Activated CD4-positive, alpha-beta T cell treated with anti-CD3 and anti-CD28 coated beads, Interleukin-2, amount 10 ng/mL, durations not matched to agents 24 days and 14 days (primary cell): ENCODE measurements at regions of chr6 and their contacts with region 1.

Region 1: GRCh38 chr6:28136585-28137504 is 4.8 kb upstream of the ZKSCAN8 start:
- DNase-seq: peak; percentile 92
- H3K4me3 Mint-ChIP-seq: peak overlapping the region; percentile 93
- H3K27ac Mint-ChIP-seq: peak overlapping the region; percentile 94
- H3K4me1 Mint-ChIP-seq: peaks cover 58% of the 10 kb centered on the region
- H3K27me3 Mint-ChIP-seq: no peaks in the 10 kb centered on the region

Region 2: GRCh38 chr6:28104392-28105244 is 32.2 kb before region 1 on chr6:
- intact Hi-C with region 1: loop called (anchors 1 kb)
- DNase-seq: peak; percentile 94
- H3K4me3 Mint-ChIP-seq: peak overlapping the region; percentile 87
- H3K27ac Mint-ChIP-seq: peak overlapping the region; percentile 79
- H3K4me1 Mint-ChIP-seq: peaks cover 8% of the 10 kb centered on the region
- H3K27me3 Mint-ChIP-seq: peaks cover 18% of the 10 kb centered on the region

Region 3: DNA sequence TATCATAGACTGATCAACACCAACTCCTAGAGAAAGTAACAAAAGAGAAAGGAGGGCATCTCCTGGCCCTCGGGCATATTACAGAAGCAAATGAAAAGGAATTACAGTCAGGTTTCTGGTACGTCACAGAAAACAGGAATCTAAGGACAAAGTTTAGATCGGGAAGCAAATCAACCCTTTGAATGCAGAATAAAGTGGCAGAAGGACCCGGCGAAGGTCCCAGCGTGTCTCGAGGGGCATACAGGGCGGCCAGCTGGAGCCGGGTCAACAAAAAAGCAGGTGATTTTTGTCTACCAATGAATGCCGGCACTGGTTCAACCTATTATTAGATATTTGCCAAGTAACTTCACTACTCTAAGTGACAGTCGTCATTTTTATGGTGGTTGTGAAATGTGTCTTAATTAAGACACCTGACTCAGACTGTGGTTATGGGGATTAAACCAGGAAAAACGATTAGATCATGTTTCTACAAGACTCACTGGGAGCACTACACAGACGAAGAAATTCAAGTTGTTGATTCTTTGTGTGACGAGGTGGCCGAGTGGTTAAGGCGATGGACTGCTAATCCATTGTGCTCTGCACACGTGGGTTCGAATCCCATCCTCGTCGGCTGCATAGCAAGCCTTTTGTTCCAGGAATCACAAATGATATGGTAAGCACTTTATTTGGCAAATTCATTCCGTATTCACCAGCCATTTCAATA is 75.8 kb after region 1 on chr6:
- intact Hi-C with region 1: loop called (anchors 5 kb)
- DNase-seq: peak; percentile 78
- H3K4me3 Mint-ChIP-seq: peak overlapping the region; percentile 84
- H3K27ac Mint-ChIP-seq: peak overlapping the region; percentile 39
- H3K4me1 Mint-ChIP-seq: peaks cover 22% of the 10 kb centered on the region
- H3K27me3 Mint-ChIP-seq: peaks cover 79% of the 10 kb centered on the region

Region 4: DNA sequence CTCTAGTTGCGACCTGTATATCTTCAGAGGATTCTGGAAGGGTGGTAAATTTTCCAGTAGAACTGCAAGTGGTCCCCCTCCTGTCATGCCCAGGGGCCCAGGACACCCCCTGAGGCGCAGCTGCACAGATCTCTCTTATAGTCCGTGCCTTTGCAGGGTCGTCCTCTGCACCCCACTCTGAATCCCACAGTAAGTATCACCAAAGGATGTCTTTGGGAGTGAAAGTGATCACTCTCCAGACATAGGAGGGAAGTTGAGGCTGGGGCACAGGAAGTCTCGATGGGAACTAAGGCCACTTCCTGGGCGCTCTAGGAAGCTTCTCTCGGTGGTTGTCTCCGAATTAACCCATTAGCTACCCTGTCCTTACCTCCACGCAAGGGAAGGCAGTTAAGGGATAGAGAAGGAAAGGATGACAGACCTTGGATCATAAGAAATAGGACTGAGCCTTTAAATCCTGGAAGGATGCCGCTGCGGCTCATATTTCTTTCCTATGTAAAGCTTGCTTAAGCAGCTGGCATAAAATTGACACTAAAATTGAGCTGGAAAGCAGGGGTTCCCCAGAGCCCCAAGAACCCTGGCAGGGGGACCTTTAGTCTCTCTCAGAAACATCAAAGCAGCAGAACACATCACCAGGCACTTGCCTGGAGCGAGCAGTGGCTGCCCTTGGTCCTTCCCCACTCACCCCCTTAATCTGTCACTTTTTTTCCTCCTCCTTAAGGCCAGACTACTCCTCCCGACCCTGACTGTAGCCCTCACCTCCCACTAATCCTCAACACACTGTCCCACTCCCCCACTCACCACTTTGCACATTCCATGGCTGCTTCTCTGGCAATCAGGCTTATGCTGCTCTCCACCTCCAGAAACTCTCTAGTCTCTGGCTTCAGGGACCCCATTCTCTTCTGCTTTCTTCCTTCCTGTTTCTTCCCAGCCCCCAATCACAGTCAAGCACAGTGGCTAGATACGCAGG is 115.4 kb after region 1 on chr6 and contains the start of gene ZKSCAN4:
- intact Hi-C with region 1: loop called (anchors 1 kb)
- DNase-seq: peak; percentile 95
- H3K4me3 Mint-ChIP-seq: peak within 1 kb of the TSS; percentile 97
- H3K27ac Mint-ChIP-seq: peak within 1 kb of the TSS; percentile 89
- H3K4me1 Mint-ChIP-seq: peaks cover 19% of the 10 kb centered on the region
- H3K27me3 Mint-ChIP-seq: no peaks in the 10 kb centered on the region
- total RNA-seq, gene ZKSCAN4: 3.8 and 4.9 TPM in 2 replicates

Region 5: DNA sequence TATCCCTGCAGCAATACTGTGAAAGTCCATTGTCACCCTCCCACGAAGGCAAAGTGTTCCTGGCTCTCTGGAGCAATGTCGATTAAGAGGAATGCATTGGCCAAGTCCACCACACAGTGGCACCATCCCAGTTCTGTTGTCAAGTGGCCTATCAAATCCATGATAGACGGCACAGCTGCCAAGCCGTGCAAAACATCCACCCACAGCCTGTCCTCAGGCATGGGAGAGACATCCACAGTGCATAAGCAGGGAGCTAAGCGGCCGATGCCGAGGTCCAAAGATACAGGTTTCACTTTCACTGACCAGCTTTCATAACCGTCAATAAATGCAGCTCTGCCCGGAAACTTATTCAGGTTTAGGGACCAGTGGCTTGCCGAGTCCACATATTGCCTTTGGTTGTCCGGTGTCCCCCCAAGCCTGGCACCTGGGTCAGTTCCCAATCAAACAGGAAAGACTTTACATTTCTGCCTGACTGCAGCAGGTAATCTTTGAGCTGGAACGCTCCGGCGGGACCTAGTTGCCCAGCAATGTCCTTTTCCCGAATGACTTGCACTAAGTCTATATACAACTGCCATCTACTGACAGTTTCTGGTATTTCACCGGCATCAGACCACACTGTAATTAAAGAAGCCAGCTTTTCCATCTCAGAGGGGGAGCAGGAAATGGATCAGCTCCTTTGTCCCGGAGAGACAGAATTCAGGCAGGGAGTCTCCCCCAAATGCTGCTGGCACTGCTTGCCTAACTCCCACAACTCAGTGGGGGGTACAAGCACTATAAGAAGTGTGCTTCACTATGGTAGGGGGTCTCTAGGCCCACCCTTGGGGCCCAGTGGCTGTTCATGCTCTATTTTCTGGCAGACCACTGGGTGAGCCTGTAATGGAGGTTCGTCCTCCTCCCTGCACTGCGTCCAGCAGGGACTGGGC is 219.2 kb after region 1 on chr6:
- intact Hi-C with region 1: loop called (anchors 1 kb)
- DNase-seq: peak; percentile 91
- H3K4me3 Mint-ChIP-seq: peak overlapping the region; percentile 93
- H3K27ac Mint-ChIP-seq: peak overlapping the region; percentile 79
- H3K4me1 Mint-ChIP-seq: peaks cover 16% of the 10 kb centered on the region
- H3K27me3 Mint-ChIP-seq: no peaks in the 10 kb centered on the region